ENCODE measurements at regions of chr12 and their contacts with region 1.

Region 1: GRCh38 chr12:12916135-12916944 is 25.0 kb downstream of the GPRC5A start:
- DNase-seq: no peak
- H3K4me3 ChIP-seq: no peak overlapping the region
- CTCF ChIP-seq: peak; percentile 97

Region 2: DNA sequence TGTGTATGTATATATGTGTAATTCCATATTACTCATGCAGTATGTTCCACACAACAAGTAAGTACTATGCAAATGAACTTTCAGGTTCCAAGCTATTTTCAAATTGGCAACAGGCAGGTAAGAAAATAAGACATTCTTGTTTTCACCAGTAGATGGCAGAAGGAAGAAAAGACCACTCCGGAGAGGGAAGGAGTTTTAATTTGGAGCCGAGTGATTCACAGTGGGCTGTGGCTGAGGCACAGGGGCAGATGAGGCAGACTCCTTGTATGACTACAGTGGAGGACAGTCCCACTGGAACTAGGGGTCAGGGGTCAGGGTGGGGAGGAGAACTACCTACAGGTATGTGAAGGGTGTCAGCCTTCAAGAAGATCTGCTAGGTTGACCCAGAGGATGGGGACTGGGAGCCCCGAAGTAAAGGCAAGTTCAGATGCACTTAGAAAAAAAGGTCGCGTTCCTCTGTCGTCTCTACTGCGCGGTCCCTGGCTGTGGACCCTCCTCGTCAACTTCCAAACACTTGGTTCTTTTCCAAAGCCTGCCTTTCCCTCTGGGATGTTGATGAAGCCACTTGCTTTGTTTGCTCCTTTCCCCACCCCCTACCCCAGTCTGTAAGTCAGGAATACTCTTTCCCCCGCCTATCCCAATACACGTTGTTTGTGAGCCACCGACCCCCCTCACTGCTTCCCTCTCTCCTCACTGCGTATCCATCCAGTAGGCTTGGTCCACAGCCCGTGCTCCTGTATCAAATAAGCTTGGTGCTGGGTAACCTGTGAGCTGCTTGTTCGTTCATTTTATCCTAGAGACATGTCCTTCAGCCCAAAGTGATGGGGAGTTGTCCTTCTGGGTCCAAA is 79.1 kb before region 1 on chr12:
- CTCF ChIA-PET with region 1: interaction called, 12 read pairs
- POLR2A ChIA-PET with region 1: no interaction called
- DNase-seq: no peak
- H3K4me3 ChIP-seq: no peak overlapping the region
- CTCF ChIP-seq: peak; percentile 47

Region 3: DNA sequence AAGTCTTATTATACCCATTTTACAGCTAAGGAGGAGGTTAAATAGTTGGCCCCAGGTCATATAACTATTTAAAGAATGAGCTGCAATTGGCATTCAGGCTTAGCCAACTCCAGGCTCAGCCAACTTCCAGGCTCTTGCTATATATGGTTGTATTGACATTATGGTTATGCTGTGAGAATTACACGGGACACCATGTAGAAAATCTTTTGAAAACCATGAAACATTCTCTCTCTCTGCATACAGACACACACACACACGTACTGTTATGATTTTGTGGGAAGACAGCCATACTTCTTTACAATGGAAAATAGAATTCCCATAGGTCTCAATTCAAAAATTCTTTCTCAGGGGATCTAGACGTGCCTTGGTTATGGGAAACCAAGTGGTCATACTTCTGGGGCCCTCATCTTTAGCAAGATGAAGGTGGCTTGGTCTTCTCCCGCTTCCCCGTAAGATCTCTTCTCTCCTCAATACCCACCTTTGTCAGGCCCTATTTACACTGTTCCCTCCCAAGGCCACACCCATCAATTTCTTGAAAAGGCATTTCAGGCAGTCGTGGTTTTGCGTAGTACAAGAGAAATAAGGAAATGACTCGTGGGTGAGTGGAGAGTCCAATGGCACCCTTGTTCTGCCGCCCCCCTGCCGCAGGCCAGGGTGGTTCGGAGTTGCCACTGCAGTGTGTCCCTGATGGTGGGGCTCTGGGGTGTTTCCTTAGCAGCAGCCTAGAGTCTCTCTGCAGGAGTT is 35.0 kb before region 1 on chr12:
- CTCF ChIA-PET with region 1: no interaction called
- POLR2A ChIA-PET with region 1: no interaction called
- DNase-seq: no peak
- H3K4me3 ChIP-seq: no peak overlapping the region
- CTCF ChIP-seq: no peak

Region 4: DNA sequence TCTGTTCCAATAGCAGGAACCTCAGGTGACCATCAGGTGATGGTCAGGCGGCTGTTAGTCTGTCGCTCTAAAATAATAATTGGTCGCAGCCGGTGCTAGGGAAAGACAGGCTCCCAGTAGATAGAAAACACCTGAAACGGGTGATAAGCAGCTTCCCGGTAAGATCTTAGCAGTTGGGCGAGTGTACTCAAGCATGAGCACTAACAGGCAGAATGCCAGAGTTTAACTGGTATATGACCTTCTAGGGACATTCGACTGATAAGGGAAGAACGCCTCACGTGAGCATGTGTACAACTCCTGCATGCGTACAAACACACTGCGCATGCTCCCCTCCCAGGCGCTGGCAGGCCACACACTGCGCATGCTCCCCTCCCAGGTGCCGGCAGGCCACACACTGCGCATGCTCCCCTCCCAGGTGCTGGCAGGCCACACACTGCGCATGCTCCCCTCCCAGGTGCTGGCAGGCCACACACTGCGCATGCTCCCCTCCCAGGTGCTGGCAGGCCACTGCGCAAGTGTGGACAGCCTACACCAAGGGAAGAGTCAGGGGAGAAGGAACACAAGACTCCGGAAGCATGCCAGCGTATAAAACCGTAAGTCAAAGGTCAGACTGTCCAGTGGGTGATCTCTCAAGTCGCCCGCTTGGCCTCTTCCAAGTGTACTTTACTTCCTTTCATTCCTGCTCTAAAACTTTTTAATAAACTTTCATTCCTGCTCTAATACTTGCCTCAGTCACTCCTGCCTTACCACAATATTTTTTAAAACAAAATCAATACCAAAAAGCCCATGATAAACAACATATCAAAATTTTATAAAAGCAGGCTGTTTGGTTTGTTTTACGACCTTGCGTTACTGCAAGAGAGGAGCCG is 11.1 kb after region 1 on chr12:
- CTCF ChIA-PET with region 1: interaction called, 11 read pairs
- POLR2A ChIA-PET with region 1: no interaction called
- DNase-seq: no peak
- H3K4me3 ChIP-seq: peak overlapping the region; percentile 55
- CTCF ChIP-seq: no peak

Region 5: GRCh38 chr12:12983420-12984035 is 67.2 kb after region 1 on chr12:
- CTCF ChIA-PET with region 1: interaction called, 173 read pairs
- POLR2A ChIA-PET with region 1: no interaction called
- DNase-seq: no peak
- H3K4me3 ChIP-seq: no peak overlapping the region
- CTCF ChIP-seq: peak; percentile 69

Region 6: DNA sequence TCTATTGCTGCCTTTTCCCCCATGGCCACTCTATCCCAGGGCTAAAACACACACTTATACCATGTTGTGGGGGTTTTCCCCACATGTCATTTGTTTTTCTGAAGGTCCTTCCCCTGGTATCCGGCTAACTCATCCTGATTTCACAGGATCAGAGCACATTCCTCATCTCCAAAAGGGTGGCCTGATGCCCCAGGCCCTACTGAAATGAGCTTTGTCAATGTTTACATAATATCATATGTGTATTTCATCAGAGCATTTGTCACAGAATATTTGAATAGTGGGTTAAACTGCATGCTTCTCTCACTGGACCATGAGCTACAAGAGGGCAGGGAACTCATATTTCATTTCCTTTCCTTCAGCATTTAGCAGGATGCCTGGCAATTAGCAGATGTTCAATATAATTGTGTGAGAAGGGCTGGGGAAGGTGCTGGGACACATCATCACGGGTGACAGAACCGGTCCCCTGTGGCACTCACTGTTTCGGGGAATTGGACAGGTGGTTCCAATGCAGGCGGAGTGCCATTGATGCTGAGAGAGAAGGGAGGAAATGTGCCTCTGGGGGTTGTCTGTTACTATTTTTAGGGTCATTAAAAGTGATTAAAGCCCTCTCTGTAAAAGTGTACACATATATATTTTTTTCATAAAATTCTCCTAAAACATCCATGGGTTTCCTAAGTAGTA is 307.0 kb after region 1 on chr12:
- CTCF ChIA-PET with region 1: interaction called, 12 read pairs
- POLR2A ChIA-PET with region 1: no interaction called
- DNase-seq: peak; percentile 77
- H3K4me3 ChIP-seq: no peak overlapping the region
- CTCF ChIP-seq: no peak

Region 7: GRCh38 chr12:13255792-13256691 is 339.7 kb after region 1 on chr12:
- CTCF ChIA-PET with region 1: interaction called, 12 read pairs
- POLR2A ChIA-PET with region 1: no interaction called
- DNase-seq: peak; percentile 38
- H3K4me3 ChIP-seq: peak overlapping the region; percentile 52
- CTCF ChIP-seq: peak; percentile 100

Measured in AG04449 (cell line).